ENCODE measurements at regions of chr1 and their contacts with region 1.

Region 1: DNA sequence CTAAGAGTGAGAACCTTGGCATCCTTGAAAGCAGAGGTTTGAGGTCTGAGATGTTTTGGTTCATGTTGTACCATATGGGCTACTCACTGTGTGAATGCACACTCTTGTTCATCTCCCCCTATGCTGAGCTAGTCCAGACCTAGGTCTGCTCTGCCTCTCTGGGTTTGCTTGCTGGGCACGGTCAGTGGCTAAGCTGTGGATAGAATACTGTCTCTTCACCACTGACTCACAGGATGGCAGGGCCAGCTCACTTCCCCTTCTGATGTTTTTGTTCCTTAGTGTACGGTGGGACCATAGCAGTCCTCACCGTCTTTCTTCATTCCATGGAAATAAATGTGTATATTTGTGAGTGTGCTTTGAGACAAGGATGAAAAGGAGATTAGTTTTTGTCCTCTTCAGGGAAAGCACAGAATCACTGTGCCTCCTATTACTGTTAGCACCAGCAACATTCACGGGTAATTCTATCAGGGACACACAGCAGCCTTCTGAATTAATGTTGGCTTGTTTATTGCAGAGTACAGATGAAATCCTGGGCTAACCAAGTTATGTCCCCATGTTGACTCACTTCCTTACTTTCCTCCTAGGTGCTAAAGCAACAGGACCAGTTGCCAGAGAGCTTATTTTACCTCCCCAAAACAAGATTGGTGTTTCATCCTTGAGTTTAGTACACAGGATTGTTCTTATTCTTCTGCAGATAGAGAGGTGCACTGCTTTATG is 56.9 kb upstream of the IVNS1ABP start:
- DNase-seq: peak; percentile 69
- ATAC-seq: peak; percentile 90
- H3K4me3 ChIP-seq: peak overlapping the region; percentile 53
- H3K27ac ChIP-seq: peak overlapping the region; percentile 95
- H3K4me1 ChIP-seq: peaks cover 48% of the 10 kb centered on the region
- H3K27me3 ChIP-seq: no peaks in the 10 kb centered on the region
- CTCF ChIP-seq: no peak

Region 2: GRCh38 chr1:185027252-185027882 is 346.6 kb before region 1 on chr1:
- CTCF ChIA-PET with region 1: no interaction called
- POLR2A ChIA-PET with region 1: no interaction called
- intact Hi-C with region 1: no loop called
- DNase-seq: no peak
- ATAC-seq: no peak
- H3K4me3 ChIP-seq: no peak overlapping the region
- H3K27ac ChIP-seq: no peak overlapping the region
- H3K4me1 ChIP-seq: no peaks in the 10 kb centered on the region
- H3K27me3 ChIP-seq: no peaks in the 10 kb centered on the region
- CTCF ChIP-seq: no peak

Region 3: DNA sequence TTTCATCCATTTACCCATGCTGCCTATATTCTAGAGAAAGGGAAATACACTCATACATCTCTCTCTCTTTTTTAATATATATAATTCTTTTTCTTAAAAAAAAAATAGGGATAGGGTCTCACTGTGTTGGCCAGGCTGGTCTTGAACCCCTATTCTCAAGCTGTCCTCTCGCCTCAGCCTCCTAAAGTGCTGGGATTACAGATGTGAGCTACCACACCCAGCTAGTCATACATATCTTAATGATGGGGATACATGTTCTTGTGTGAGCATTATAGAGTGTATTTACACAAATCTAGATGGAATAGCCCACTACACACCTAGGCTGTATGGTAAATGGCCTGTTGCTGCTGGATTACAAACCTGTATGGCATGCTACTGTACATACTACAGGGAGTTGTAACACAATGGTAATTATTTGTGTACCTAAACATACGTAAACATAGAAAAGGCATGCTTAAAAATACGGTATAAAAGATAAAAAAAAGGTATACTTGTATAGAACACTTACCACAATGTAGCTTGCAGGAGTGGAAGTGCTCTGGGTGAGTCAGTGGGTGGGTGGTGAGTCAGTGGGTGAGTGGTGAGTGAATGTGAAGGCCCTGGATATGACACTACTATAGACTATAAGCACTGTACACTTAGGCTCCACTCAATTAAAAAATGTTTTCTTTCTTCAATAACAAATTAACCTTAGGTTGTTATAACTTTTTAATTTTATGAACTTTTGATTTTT is 129.8 kb before region 1 on chr1:
- CTCF ChIA-PET with region 1: no interaction called
- POLR2A ChIA-PET with region 1: interaction called, 11 read pairs
- intact Hi-C with region 1: no loop called
- DNase-seq: peak; percentile 77
- ATAC-seq: peak; percentile 100
- H3K4me3 ChIP-seq: no peak overlapping the region
- H3K27ac ChIP-seq: peak overlapping the region; percentile 50; the same call in 1 of the 2 replicates
- H3K4me1 ChIP-seq: peaks cover 9% of the 10 kb centered on the region
- H3K27me3 ChIP-seq: no peaks in the 10 kb centered on the region
- CTCF ChIP-seq: no peak

Region 4: GRCh38 chr1:185325413-185325812 is 48.6 kb before region 1 on chr1:
- CTCF ChIA-PET with region 1: no interaction called
- POLR2A ChIA-PET with region 1: no interaction called
- intact Hi-C with region 1: no loop called
- DNase-seq: no peak
- ATAC-seq: no peak
- H3K4me3 ChIP-seq: no peak overlapping the region
- H3K27ac ChIP-seq: no peak overlapping the region
- H3K4me1 ChIP-seq: no peaks in the 10 kb centered on the region
- H3K27me3 ChIP-seq: no peaks in the 10 kb centered on the region
- CTCF ChIP-seq: no peak

Region 5: GRCh38 chr1:185439727-185440415 is 65.9 kb after region 1 on chr1:
- CTCF ChIA-PET with region 1: no interaction called
- POLR2A ChIA-PET with region 1: no interaction called
- intact Hi-C with region 1: loop called (anchors 5 kb)
- DNase-seq: peak; percentile 83
- ATAC-seq: peak; percentile 87
- H3K4me3 ChIP-seq: no peak overlapping the region
- H3K27ac ChIP-seq: peak overlapping the region; percentile 36; the same call in 1 of the 2 replicates
- H3K4me1 ChIP-seq: peaks cover 37% of the 10 kb centered on the region
- H3K27me3 ChIP-seq: no peaks in the 10 kb centered on the region
- CTCF ChIP-seq: no peak